Heart right ventricle (tissue), 16 donors: ENCODE measurements at regions of chr7 and their contacts with region 1.

Region 1: GRCh38 chr7:111486472-111487142 is 75.7 kb downstream of the IMMP2L start:
- DNase-seq: peak in 1 of 2 donors; percentile 13
- ATAC-seq: peak in 5 of 8 donors; percentile 41 to 69 (median 56)
- H3K4me3 ChIP-seq: no peak overlapping the region
- H3K27ac ChIP-seq: no peak overlapping the region
- H3K4me1 ChIP-seq: peaks cover 0 to 4% (median 0%) of the 10 kb centered on the region in 9 donors
- H3K27me3 ChIP-seq: no peaks in the 10 kb centered on the region
- CTCF ChIP-seq: peak; percentile 23 to 87 (median 76)

Region 2: GRCh38 chr7:110090110-110090769 is 1396.4 kb before region 1 on chr7:
- intact Hi-C with region 1: loop called in 1 of 10 experiments (anchors 5 kb)
- DNase-seq: no peak
- ATAC-seq: no peak
- H3K4me3 ChIP-seq: no peak overlapping the region
- H3K27ac ChIP-seq: no peak overlapping the region
- H3K4me1 ChIP-seq: no peaks in the 10 kb centered on the region
- H3K27me3 ChIP-seq: no peaks in the 10 kb centered on the region
- CTCF ChIP-seq: peak in 5 of 9 donors; percentile 27 to 48 (median 34)

Region 3: GRCh38 chr7:111089822-111090426 is 396.7 kb before region 1 on chr7:
- intact Hi-C with region 1: loop called (anchors 2 to 10 kb)
- DNase-seq: no peak
- ATAC-seq: peak in 5 of 8 donors; percentile 64 to 78 (median 66)
- H3K4me3 ChIP-seq: peak overlapping the region in 1 of 10 donors; percentile 59
- H3K27ac ChIP-seq: no peak overlapping the region
- H3K4me1 ChIP-seq: peaks cover 0 to 31% (median 13%) of the 10 kb centered on the region in 9 donors
- H3K27me3 ChIP-seq: no peaks in the 10 kb centered on the region
- CTCF ChIP-seq: peak; percentile 54 to 88 (median 79)

Region 4: DNA sequence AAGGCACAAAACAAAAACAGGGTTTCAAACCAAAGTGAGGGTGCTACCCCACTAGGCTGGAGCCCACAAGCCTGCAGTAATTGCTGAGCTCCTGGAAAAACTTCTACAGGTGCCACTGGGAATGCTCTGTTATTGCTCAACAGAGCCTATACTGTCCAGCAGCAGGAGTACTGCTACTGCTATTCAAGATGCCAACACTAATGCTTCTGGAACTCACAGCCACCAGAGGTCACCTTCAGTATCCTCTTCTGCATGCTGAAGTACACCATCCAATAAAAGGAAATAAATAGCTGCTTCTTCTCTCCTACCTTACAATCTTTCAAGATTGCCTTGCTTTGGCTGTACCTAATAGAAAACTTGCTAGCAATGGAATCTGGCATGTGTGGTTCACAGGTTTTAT is 173.6 kb before region 1 on chr7:
- intact Hi-C with region 1: loop called in 1 of 10 experiments (anchors 5 kb)
- DNase-seq: no peak
- ATAC-seq: no peak
- H3K4me3 ChIP-seq: no peak overlapping the region
- H3K27ac ChIP-seq: no peak overlapping the region
- H3K4me1 ChIP-seq: peaks cover 0 to 5% (median 0%) of the 10 kb centered on the region in 9 donors
- H3K27me3 ChIP-seq: no peaks in the 10 kb centered on the region
- CTCF ChIP-seq: peak in 2 of 9 donors; percentile 27 to 31